A673 (cell line): ENCODE measurements at regions of chr5 and their contacts with region 1.

Region 1: DNA sequence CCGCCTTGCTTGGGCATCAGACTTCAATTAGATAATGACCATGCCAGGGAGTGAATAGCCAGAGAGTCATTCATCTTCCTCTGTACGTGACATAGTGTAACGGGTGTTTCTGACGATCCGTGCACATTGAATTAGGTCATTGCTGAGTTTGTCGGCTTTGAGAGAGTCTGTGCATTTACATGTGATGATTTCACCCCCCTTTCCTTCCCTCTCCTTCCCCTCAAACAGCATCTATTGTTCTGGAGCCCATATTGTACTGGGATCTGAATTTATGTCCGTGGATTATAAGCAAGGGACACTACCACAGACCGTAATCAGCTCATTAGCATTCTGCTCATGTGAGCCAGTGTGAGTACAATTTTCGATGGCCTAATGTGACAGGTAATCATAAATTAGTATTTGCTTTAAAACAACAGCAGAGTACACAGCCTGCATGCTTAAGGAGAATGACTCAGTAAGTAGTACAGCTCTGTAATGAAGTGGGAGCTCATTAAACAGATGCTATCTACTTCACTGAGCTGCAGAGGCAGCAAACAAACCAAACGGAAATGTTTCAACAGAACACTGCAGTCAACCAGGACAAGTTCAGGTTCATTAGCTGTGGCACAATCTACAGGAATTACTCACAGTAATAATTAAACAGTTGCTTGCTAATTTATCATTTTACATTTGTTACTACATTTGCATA is 302.1 kb downstream of the CSNK1G3 start:
- DNase-seq: peak; percentile 81
- H3K4me3 ChIP-seq: peak overlapping the region; percentile 3
- H3K27ac ChIP-seq: peak overlapping the region; percentile 3
- H3K4me1 ChIP-seq: peaks cover 63% of the 10 kb centered on the region
- H3K27me3 ChIP-seq: no peaks in the 10 kb centered on the region
- CTCF ChIP-seq: no peak

Region 2: GRCh38 chr5:123875561-123876283 is 61.6 kb after region 1 on chr5:
- CTCF ChIA-PET with region 1: no interaction called
- POLR2A ChIA-PET with region 1: no interaction called
- intact Hi-C with region 1: loop called (anchors 5 kb)
- DNase-seq: peak; percentile 83
- H3K4me3 ChIP-seq: peak overlapping the region; percentile 24
- H3K27ac ChIP-seq: peak overlapping the region; percentile 79
- H3K4me1 ChIP-seq: peaks cover 40% of the 10 kb centered on the region
- H3K27me3 ChIP-seq: no peaks in the 10 kb centered on the region
- CTCF ChIP-seq: 0 out of 2 replicates have a peak, but pooled peaks have one; percentile 16